ENCODE measurements at regions of chr16 and their contacts with region 1.

Region 1: GRCh38 chr16:68289621-68290329 is 21.0 kb downstream of the SLC7A6OS start:
- DNase-seq: peak in 6 of 9 donors; percentile 20 to 57 (median 52)
- ATAC-seq: peak; percentile 75
- H3K4me3 ChIP-seq: peak overlapping the region; percentile 2
- H3K4me3 Mint-ChIP-seq: peak overlapping the region; percentile 43 to 87 (median 68)
- H3K27ac ChIP-seq: peak overlapping the region; percentile 68
- H3K27ac Mint-ChIP-seq: peak overlapping the region; percentile 84 to 95 (median 90)
- H3K4me1 ChIP-seq: peaks cover 76 to 83% of the 10 kb centered on the region in 2 donors
- H3K4me1 Mint-ChIP-seq: peaks cover 70 to 97% (median 87%) of the 10 kb centered on the region in 7 donors
- H3K27me3 ChIP-seq: no peaks in the 10 kb centered on the region
- H3K27me3 Mint-ChIP-seq: no peaks in the 10 kb centered on the region

Region 2: DNA sequence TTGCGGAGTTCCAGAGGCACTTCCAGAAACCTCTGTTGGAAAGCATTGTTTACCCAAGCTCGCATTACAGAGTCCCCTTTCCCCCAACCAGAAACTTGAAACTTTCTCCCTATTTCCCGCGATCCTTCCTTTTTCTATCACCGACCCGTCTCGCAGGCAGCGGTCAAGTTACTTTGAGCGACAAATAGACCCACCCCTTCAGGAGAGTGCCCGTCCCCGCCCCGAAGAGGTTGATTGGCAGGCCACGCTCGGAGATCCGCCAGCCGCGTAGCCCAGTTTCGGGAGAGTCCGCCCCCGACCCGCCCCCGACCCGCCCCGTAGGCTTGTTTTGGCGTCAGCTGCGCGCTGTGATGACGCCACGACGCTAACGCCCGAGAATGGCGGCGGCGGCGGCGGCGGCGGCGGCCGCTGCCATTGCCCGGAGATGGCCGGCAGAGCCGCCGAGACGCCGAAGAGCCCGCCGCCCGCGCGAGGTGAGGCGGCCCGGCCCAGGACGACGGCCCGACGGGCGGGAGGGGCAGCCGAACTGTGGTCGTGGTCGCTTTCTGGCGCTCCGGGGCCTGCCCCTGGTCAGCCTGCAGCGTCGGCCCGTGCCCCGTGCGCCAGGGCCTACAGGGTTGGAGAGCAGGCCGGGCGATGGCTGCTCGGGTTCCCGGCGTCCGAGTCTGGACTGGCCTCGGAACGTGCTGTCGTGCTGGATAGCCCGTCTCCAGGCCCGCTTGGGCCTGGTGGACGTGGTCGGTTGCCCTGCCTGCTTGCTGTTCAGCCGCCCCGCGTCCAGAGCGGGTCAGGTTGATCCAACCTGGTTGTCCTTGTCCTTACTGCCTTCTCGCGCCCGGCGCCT is 396.7 kb before region 1 on chr16 and contains the start of gene PSKH1:
- CTCF ChIA-PET with region 1: no interaction called
- POLR2A ChIA-PET with region 1: no interaction called
- intact Hi-C with region 1: no loop called
- DNase-seq: peak; percentile 77 to 92 (median 84)
- ATAC-seq: peak; percentile 99
- H3K4me3 ChIP-seq: peak within 1 kb of the TSS; percentile 89
- H3K4me3 Mint-ChIP-seq: peak within 1 kb of the TSS; percentile 86 to 97 (median 94)
- H3K27ac ChIP-seq: peak within 1 kb of the TSS; percentile 94
- H3K27ac Mint-ChIP-seq: peak within 1 kb of the TSS; percentile 85 to 98 (median 97)
- H3K4me1 ChIP-seq: peaks cover 12 to 15% of the 10 kb centered on the region in 2 donors
- H3K4me1 Mint-ChIP-seq: peaks cover 22 to 48% (median 35%) of the 10 kb centered on the region in 7 donors
- H3K27me3 ChIP-seq: no peaks in the 10 kb centered on the region
- H3K27me3 Mint-ChIP-seq: no peaks in the 10 kb centered on the region
- total RNA-seq, gene PSKH1: 18.0 to 28.5 (median 23.3) TPM

Region 3: GRCh38 chr16:68031951-68032350 is 257.8 kb before region 1 on chr16:
- CTCF ChIA-PET with region 1: no interaction called
- POLR2A ChIA-PET with region 1: no interaction called
- intact Hi-C with region 1: no loop called
- DNase-seq: no peak
- ATAC-seq: no peak
- H3K4me3 ChIP-seq: no peak overlapping the region
- H3K4me3 Mint-ChIP-seq: peak overlapping the region in 1 of 10 donors; percentile 12
- H3K27ac ChIP-seq: no peak overlapping the region
- H3K27ac Mint-ChIP-seq: peak overlapping the region in 3 of 9 donors; percentile 17 to 56 (median 42)
- H3K4me1 ChIP-seq: peaks cover 0 to 8% of the 10 kb centered on the region in 2 donors
- H3K4me1 Mint-ChIP-seq: peaks cover 4 to 26% (median 12%) of the 10 kb centered on the region in 7 donors
- H3K27me3 ChIP-seq: no peaks in the 10 kb centered on the region
- H3K27me3 Mint-ChIP-seq: no peaks in the 10 kb centered on the region

Region 4: GRCh38 chr16:68275611-68276191 is 14.1 kb before region 1 on chr16:
- CTCF ChIA-PET with region 1: interaction called, 32 read pairs
- POLR2A ChIA-PET with region 1: interaction called, 531 read pairs
- intact Hi-C with region 1: loop called (anchors 1 kb)
- DNase-seq: peak in 7 of 9 donors; percentile 68 to 84 (median 83)
- ATAC-seq: peak; percentile 86
- H3K4me3 ChIP-seq: peak overlapping the region; percentile 38
- H3K4me3 Mint-ChIP-seq: peak overlapping the region; percentile 71 to 100 (median 80)
- H3K27ac ChIP-seq: peak overlapping the region; percentile 83
- H3K27ac Mint-ChIP-seq: peak overlapping the region; percentile 89 to 98 (median 97)
- H3K4me1 ChIP-seq: peaks cover 58 to 83% of the 10 kb centered on the region in 2 donors
- H3K4me1 Mint-ChIP-seq: peaks cover 40 to 84% (median 74%) of the 10 kb centered on the region in 7 donors
- H3K27me3 ChIP-seq: no peaks in the 10 kb centered on the region
- H3K27me3 Mint-ChIP-seq: no peaks in the 10 kb centered on the region

Region 5: GRCh38 chr16:69057400-69058378 is 767.9 kb after region 1 on chr16:
- CTCF ChIA-PET with region 1: no interaction called
- POLR2A ChIA-PET with region 1: no interaction called
- intact Hi-C with region 1: no loop called
- DNase-seq: no peak
- ATAC-seq: no peak
- H3K4me3 ChIP-seq: no peak overlapping the region
- H3K4me3 Mint-ChIP-seq: no peak overlapping the region
- H3K27ac ChIP-seq: no peak overlapping the region
- H3K27ac Mint-ChIP-seq: peak overlapping the region in 3 of 9 donors; percentile 7 to 48 (median 40)
- H3K4me1 ChIP-seq: no peaks in the 10 kb centered on the region
- H3K4me1 Mint-ChIP-seq: peaks cover 0 to 7% (median 0%) of the 10 kb centered on the region in 7 donors
- H3K27me3 ChIP-seq: no peaks in the 10 kb centered on the region
- H3K27me3 Mint-ChIP-seq: no peaks in the 10 kb centered on the region